H1 (cell line): ENCODE measurements at regions of chr22 and their contacts with region 1.

Region 1: DNA sequence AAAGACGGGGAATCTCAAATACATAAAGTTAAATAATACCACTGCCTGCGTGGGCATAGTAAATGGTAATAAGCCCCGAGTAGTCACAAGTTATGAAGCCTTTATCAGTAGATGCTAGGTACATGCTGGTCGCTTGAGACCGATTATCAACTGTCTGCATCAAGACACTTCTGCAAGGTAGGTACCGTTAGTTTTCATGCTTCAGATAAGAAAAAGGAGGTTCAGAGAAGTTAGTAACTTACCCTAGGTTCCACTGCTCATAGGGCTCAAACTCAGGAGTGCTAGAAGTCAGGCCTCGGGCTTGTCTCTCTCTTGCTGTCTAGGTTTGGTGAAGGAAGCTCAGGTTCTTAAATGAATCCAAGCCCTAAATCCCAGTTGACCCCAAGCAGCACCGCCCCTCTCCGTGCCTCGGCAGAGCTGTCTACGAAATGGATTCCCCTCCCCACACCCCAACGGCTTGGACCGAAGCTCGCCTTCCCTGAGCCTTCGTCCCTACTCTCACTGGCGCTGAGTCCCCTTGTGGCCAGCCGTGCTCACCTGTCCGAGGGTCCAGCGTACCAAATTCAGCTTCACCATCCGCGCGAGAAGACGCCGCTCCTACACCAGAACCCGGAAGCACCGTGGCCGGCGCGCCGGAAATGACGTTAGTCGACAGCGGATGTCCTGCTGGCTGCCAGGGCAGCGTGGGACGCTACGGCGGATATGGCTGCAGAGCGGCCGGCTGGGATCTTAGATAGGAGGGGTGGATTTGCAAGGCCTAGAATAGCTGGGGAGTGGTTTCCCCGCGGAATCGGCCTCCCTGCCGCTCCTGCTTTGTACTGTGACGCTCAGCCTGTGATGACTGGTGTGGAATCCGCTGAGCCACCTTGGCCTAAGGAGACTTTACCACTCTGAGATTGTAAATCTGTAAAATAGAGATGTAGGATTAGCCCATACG is at the start of gene TFIP11:
- DNase-seq: peak; percentile 79 to 99
- H3K4me3 ChIP-seq: peak within 1 kb of the TSS; percentile 58 to 87 (median 73)
- H3K27ac ChIP-seq: peak within 1 kb of the TSS; percentile 49
- H3K4me1 ChIP-seq: peaks cover 0 to 5% (median 3%) of the 10 kb centered on the region in 4 experiments; a peak in 3 of 7 replicates
- H3K27me3 ChIP-seq: no peaks in the 10 kb centered on the region
- CTCF ChIP-seq: peak; percentile 33 to 52 (median 49)
- EP300 ChIP-seq: no peak
- POLR2A ChIP-seq: peak; percentile 51 to 81
- RAD21 ChIP-seq: peak; percentile 24 to 30; a peak in 2 of 4 replicates
- total RNA-seq, gene TFIP11: 23.9 and 28.3 TPM in 2 replicates

Region 2: GRCh38 chr22:26416670-26417250 is 95.4 kb before region 1 on chr22:
- CTCF ChIA-PET with region 1: no interaction called
- POLR2A ChIA-PET with region 1: no interaction called
- DNase-seq: peak; percentile 54 to 70
- H3K4me3 ChIP-seq: no peak overlapping the region
- H3K27ac ChIP-seq: no peak overlapping the region
- H3K4me1 ChIP-seq: no peaks in the 10 kb centered on the region
- H3K27me3 ChIP-seq: 0 out of 7 replicates have a peak, but pooled peaks cover 0 to 4% (median 0%) of the 10 kb centered on the region in 4 experiments
- CTCF ChIP-seq: no peak
- EP300 ChIP-seq: no peak
- POLR2A ChIP-seq: no peak
- RAD21 ChIP-seq: no peak

Region 3: GRCh38 chr22:26428515-26429457 is 83.3 kb before region 1 on chr22 and contains the start of gene ASPHD2:
- CTCF ChIA-PET with region 1: no interaction called
- POLR2A ChIA-PET with region 1: no interaction called
- DNase-seq: peak; percentile 9 to 75
- H3K4me3 ChIP-seq: peak within 1 kb of the TSS; percentile 61 to 85 (median 71)
- H3K27ac ChIP-seq: no peak within 1 kb of the TSS
- H3K4me1 ChIP-seq: peaks cover 0 to 8% (median 2%) of the 10 kb centered on the region in 4 experiments; a peak in 4 of 7 replicates
- H3K27me3 ChIP-seq: peaks cover 0 to 6% (median 6%) of the 10 kb centered on the region in 4 experiments; a peak in 4 of 7 replicates
- CTCF ChIP-seq: no peak
- EP300 ChIP-seq: no peak
- POLR2A ChIP-seq: peak; percentile 58 to 70
- RAD21 ChIP-seq: no peak
- total RNA-seq, gene ASPHD2: 11.0 and 11.1 TPM in 2 replicates

Region 4: DNA sequence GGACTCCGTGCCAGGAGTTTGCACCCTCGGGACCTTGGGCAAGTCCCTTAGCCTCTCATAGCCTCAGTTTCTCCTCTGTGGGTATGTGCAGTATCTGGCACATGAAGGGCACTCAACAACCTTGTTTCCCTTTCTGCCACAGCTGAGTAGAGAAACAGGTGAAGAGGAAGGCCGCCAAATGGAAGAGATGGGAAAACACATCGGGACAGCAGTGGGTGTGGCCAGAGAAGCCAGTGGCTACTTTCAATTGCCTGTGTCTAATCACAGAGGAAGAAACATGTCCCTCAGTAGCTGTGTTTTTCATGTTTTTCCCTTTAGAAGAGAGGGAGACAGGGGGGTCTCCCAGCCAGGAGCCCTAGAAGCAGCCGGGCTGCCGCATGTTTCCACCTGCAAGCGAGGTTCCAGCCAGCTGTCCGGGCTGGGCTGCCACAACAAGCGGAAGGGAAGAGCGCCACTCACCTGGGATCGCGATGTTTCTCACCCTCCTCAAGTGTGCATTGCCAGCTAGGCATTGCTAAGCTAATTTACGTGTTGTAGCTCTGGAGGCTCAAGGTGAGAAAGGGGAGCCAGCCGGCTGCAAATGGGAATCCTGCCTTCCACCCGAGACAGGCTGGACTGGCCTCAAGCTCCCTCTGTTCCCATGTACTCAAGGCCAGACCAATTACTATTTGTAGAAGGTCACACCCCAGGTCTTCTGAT is 66.4 kb before region 1 on chr22:
- CTCF ChIA-PET with region 1: no interaction called
- POLR2A ChIA-PET with region 1: no interaction called
- DNase-seq: no peak
- H3K4me3 ChIP-seq: no peak overlapping the region
- H3K27ac ChIP-seq: no peak overlapping the region
- H3K4me1 ChIP-seq: no peaks in the 10 kb centered on the region
- H3K27me3 ChIP-seq: no peaks in the 10 kb centered on the region
- CTCF ChIP-seq: no peak
- EP300 ChIP-seq: no peak
- POLR2A ChIP-seq: no peak
- RAD21 ChIP-seq: no peak

Region 5: DNA sequence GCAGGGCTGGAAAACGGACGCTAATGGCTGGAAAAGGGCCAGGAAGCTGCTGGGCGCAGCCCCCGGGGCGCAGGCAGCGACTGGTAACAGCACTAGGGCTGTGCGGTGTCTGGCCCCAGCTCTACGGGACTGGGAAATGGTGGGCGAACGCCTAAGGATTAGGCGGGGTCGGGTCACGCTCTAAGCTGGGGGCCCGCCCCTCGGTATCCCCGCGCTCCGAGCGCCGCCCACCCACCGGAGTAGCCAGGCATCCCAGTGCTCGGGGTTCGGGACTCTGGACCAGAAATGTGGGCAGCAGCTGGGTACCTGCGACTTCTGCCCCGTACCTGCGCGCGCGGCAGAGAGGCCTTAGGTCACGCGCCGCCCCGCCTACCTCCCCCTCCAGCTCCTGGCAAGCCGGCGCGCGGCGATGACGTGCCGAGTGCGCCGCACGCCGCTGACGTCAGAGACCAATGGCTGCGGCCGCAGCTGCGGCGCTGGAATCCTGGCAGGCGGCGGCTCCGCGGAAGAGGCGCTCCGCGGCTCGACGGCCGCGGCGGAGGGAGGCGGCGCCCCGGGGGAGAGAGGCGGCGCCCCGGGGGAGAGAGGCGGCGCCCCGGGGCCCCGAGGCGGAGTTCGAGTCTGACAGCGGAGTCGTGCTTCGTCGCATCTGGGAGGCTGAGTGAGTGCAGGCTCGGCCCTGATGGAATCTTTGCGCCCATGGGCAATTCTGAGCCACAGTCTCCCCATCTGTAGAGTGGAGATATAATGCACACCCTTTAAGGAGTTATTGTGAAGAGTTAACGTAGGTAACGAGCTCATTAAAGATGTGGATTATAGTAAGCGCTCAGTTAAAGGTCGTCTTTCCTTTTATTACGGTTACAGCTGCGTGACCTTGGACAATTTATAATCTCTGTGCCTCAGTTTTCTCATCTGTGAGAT is 28.4 kb before region 1 on chr22 and contains the starts of genes HPS4 and SRRD:
- CTCF ChIA-PET with region 1: no interaction called
- POLR2A ChIA-PET with region 1: interaction called, 13 read pairs
- DNase-seq: peak; percentile 62 to 96
- H3K4me3 ChIP-seq: peak within 1 kb of the TSS; percentile 77 to 99 (median 90)
- H3K27ac ChIP-seq: peak within 1 kb of the TSS; percentile 76
- H3K4me1 ChIP-seq: peaks cover 0 to 14% (median 6%) of the 10 kb centered on the region in 4 experiments; a peak in 5 of 7 replicates
- H3K27me3 ChIP-seq: no peaks in the 10 kb centered on the region; a peak in 1 of 7 replicates
- CTCF ChIP-seq: no peak
- EP300 ChIP-seq: peak in 1 of 2 experiments; percentile 85; a peak in 2 of 3 replicates
- POLR2A ChIP-seq: peak; percentile 64 to 92
- RAD21 ChIP-seq: no peak
- total RNA-seq, gene HPS4: 32.9 and 35.2 TPM in 2 replicates
- total RNA-seq, gene SRRD: 25.3 and 26.3 TPM in 2 replicates

Region 6: DNA sequence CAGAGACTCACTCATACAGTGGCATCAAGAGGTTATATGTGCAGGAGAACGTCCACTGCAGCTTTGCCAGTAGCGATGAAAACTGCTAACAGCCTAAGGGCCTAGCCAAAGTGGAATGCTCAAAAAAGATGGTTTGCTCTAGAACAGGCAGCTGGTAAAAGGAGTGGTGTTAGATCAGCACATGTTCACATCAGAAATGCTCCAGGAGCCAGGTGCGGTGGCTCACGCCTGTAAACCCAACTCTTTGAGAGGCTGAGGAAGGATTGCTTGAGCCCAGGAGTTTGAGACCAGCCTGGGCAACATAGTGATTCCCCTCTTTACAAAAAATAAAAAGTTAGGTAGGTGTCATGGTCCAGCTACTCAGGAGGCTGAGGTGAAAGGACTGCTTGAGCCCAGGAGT is 10.5 kb after region 1 on chr22:
- CTCF ChIA-PET with region 1: interaction called, 5 read pairs
- POLR2A ChIA-PET with region 1: interaction called, 11 read pairs
- DNase-seq: no peak
- H3K4me3 ChIP-seq: no peak overlapping the region
- H3K27ac ChIP-seq: no peak overlapping the region
- H3K4me1 ChIP-seq: no peaks in the 10 kb centered on the region
- H3K27me3 ChIP-seq: no peaks in the 10 kb centered on the region
- CTCF ChIP-seq: no peak
- EP300 ChIP-seq: no peak
- POLR2A ChIP-seq: no peak
- RAD21 ChIP-seq: no peak

Region 7: DNA sequence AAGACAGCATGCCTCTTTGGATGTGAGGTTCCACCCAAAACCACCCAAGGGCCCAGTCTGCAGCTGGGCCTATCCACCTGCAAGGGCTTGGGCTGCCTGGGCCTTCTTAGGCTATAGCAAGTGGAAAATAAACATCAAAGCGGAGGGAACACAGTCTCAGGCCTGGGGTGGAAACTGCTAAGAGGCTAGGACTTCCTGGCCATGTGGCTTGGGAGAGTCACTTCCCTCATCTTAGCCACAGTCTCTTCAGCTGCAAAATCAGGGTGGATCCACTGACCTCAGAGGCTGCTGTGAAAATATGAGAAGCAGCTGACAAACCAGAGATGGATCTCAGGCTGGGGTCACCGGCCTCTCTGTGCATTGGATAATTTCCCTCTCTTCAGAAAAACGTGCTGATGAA is 30.7 kb after region 1 on chr22:
- CTCF ChIA-PET with region 1: no interaction called
- POLR2A ChIA-PET with region 1: no interaction called
- DNase-seq: no peak
- H3K4me3 ChIP-seq: no peak overlapping the region
- H3K27ac ChIP-seq: no peak overlapping the region
- H3K4me1 ChIP-seq: no peaks in the 10 kb centered on the region; a peak in 1 of 7 replicates
- H3K27me3 ChIP-seq: no peaks in the 10 kb centered on the region
- CTCF ChIP-seq: no peak
- EP300 ChIP-seq: no peak
- POLR2A ChIP-seq: no peak
- RAD21 ChIP-seq: no peak